CD8-positive, alpha-beta T cell (primary cell): ENCODE measurements at regions of chr17 and their contacts with region 1.

Region 1: GRCh38 chr17:81860756-81861518 is 602 bp upstream of the P4HB start:
- DNase-seq: peak; percentile 98 to 100 (median 99)
- ATAC-seq: peak; percentile 87
- H3K4me3 ChIP-seq: peak overlapping the region; percentile 54 to 72
- H3K4me3 Mint-ChIP-seq: peak overlapping the region; percentile 90
- H3K27ac ChIP-seq: peak overlapping the region; percentile 88 to 98
- H3K27ac Mint-ChIP-seq: peak overlapping the region; percentile 98
- H3K4me1 ChIP-seq: peaks cover 33% of the 10 kb centered on the region
- H3K4me1 Mint-ChIP-seq: peaks cover 44% of the 10 kb centered on the region
- H3K27me3 ChIP-seq: no peaks in the 10 kb centered on the region
- H3K27me3 Mint-ChIP-seq: no peaks in the 10 kb centered on the region
- CTCF ChIP-seq: no peak

Region 2: DNA sequence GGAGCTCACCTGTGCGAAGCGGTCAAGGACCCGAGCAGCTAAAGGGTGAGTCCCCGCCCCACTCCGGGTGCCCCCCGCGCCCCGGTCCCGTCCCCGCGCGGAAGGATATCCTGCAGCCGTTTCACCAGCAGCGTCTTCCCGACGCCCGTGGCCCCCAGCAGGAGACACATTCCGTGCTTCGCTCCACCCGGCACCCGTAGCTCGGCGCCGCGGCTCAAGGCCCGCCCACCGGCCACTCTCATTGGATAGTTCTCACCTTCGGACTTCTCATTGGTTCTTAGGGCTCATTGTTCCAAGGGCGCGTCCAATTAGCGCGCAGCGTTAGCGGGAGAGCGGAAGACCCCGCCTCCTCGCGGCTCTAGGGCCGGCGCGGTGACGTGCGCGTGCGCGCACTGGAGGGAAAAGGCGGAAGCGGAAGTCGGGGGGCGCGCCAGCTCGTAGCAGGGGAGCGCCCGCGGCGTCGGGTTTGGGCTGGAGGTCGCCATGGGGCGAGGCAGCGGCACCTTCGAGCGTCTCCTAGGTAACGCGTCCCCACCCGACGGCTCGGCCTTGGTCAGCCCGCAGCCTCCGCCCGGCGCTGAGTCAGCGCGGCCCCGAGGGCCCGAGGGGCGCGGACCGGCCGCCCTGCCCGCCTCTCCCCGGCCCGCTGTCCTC is 177.2 kb before region 1 on chr17 and contains the starts of genes ARL16 and HGS:
- CTCF ChIA-PET with region 1: no interaction called
- POLR2A ChIA-PET with region 1: interaction called, 3 read pairs
- intact Hi-C with region 1: loop called (anchors 1 kb)
- DNase-seq: peak; percentile 95 to 99 (median 97)
- ATAC-seq: peak; percentile 98
- H3K4me3 ChIP-seq: peak within 1 kb of the TSS; percentile 89 to 98
- H3K4me3 Mint-ChIP-seq: peak within 1 kb of the TSS; percentile 89
- H3K27ac ChIP-seq: peak within 1 kb of the TSS; percentile 57 to 77
- H3K27ac Mint-ChIP-seq: peak within 1 kb of the TSS; percentile 88
- H3K4me1 ChIP-seq: peaks cover 27% of the 10 kb centered on the region
- H3K4me1 Mint-ChIP-seq: peaks cover 32% of the 10 kb centered on the region
- H3K27me3 ChIP-seq: no peaks in the 10 kb centered on the region
- H3K27me3 Mint-ChIP-seq: no peaks in the 10 kb centered on the region
- CTCF ChIP-seq: no peak
- total RNA-seq, gene ARL16: 14.3 to 16.4 TPM
- total RNA-seq, gene HGS: 121 to 126 TPM

Region 3: DNA sequence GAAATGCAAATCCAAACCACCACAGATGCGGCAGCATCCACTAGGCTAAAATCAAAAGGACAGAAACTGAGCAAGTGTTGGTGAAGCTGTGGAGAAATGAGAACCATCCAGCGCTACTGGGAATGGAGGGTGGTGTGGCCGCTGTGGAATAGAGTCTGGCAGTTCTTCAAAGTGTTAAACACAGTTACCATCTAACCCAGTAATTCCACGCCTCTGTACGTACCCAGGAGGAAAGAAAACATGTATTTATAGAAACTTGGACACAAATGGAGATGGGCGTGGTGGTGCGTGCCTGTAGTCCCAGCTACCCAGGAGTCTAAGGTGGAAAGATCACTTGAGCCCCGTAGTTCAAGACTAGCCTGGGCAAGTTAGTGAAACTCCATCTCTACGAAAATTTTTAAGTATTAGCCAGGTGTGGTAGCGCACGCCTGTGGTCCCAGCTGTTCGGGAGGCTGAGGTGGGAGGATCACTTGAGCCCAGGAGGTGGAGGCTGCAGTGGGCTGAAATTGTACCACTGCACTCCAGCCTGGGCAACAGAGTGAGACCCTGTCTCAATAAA is 137.2 kb before region 1 on chr17:
- CTCF ChIA-PET with region 1: no interaction called
- POLR2A ChIA-PET with region 1: no interaction called
- intact Hi-C with region 1: no loop called
- DNase-seq: no peak
- ATAC-seq: no peak
- H3K4me3 ChIP-seq: no peak overlapping the region
- H3K4me3 Mint-ChIP-seq: no peak overlapping the region
- H3K27ac ChIP-seq: no peak overlapping the region
- H3K27ac Mint-ChIP-seq: no peak overlapping the region
- H3K4me1 ChIP-seq: no peaks in the 10 kb centered on the region
- H3K4me1 Mint-ChIP-seq: no peaks in the 10 kb centered on the region
- H3K27me3 ChIP-seq: no peaks in the 10 kb centered on the region
- H3K27me3 Mint-ChIP-seq: peaks cover 11% of the 10 kb centered on the region
- CTCF ChIP-seq: no peak

Region 4: GRCh38 chr17:81733507-81734404 is 127.2 kb before region 1 on chr17:
- CTCF ChIA-PET with region 1: no interaction called
- POLR2A ChIA-PET with region 1: no interaction called
- intact Hi-C with region 1: no loop called
- DNase-seq: peak in 6 of 9 experiments; percentile 34 to 72 (median 64)
- ATAC-seq: peak; percentile 90
- H3K4me3 ChIP-seq: no peak overlapping the region
- H3K4me3 Mint-ChIP-seq: no peak overlapping the region
- H3K27ac ChIP-seq: no peak overlapping the region
- H3K27ac Mint-ChIP-seq: no peak overlapping the region
- H3K4me1 ChIP-seq: no peaks in the 10 kb centered on the region
- H3K4me1 Mint-ChIP-seq: peaks cover 8% of the 10 kb centered on the region
- H3K27me3 ChIP-seq: peaks cover 0 to 19% of the 10 kb centered on the region in 2 experiments
- H3K27me3 Mint-ChIP-seq: peaks cover 28% of the 10 kb centered on the region
- CTCF ChIP-seq: peak; percentile 70

Region 5: GRCh38 chr17:81833160-81833920 is 27.6 kb before region 1 on chr17 and contains the start of gene MCRIP1:
- CTCF ChIA-PET with region 1: no interaction called
- POLR2A ChIA-PET with region 1: interaction called, 4 read pairs
- intact Hi-C with region 1: loop called (anchors 1 kb)
- DNase-seq: peak; percentile 80 to 97 (median 94)
- ATAC-seq: peak; percentile 74
- H3K4me3 ChIP-seq: peak within 1 kb of the TSS; percentile 71 to 80
- H3K4me3 Mint-ChIP-seq: peak within 1 kb of the TSS; percentile 94
- H3K27ac ChIP-seq: peak within 1 kb of the TSS; percentile 90 to 93
- H3K27ac Mint-ChIP-seq: peak within 1 kb of the TSS; percentile 96
- H3K4me1 ChIP-seq: peaks cover 17% of the 10 kb centered on the region
- H3K4me1 Mint-ChIP-seq: peaks cover 23% of the 10 kb centered on the region
- H3K27me3 ChIP-seq: no peaks in the 10 kb centered on the region
- H3K27me3 Mint-ChIP-seq: no peaks in the 10 kb centered on the region
- CTCF ChIP-seq: no peak
- total RNA-seq, gene MCRIP1: 32.2 to 34.0 TPM

Region 6: DNA sequence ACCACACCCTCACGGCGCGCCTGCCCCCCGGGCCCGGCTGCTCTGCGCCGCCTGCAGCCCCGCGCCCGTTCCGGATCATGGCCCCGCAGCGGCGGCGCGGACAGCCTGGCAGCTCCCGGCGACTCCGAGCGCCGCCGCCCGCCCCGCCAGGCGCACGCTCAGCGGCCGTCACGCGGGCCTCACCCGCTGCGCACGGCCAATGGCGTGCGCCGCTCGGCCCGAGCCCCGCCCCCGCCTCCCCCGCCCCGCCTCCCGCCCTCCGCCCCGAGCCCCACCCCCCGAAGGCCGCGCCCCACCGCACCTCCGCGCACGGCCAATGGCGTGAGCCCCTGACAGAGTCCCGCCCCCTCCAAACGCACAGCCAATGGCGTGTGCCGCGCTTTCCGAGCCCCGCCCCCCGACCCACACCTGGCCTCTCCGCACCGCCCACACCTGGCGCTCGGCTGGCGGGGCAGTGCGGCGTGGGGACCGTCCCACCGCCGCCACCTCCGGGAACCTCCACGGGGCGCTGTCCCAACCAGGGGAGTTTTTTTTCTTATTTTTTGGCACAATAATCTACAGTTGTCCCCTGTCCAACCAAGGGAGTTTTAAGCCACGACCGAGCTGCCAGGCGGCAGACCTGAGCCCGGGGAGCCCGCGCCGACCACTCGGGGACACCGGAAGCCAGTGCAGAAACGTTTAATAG is 50.5 kb after region 1 on chr17 and contains the start of gene PCYT2:
- CTCF ChIA-PET with region 1: no interaction called
- POLR2A ChIA-PET with region 1: no interaction called
- intact Hi-C with region 1: loop called (anchors 1 kb)
- DNase-seq: peak; percentile 85 to 97 (median 94)
- ATAC-seq: peak; percentile 94
- H3K4me3 ChIP-seq: peak within 1 kb of the TSS; percentile 68 to 73
- H3K4me3 Mint-ChIP-seq: peak within 1 kb of the TSS; percentile 85
- H3K27ac ChIP-seq: peak within 1 kb of the TSS; percentile 31 to 37
- H3K27ac Mint-ChIP-seq: peak within 1 kb of the TSS; percentile 55
- H3K4me1 ChIP-seq: peaks cover 18% of the 10 kb centered on the region
- H3K4me1 Mint-ChIP-seq: peaks cover 20% of the 10 kb centered on the region
- H3K27me3 ChIP-seq: no peaks in the 10 kb centered on the region
- H3K27me3 Mint-ChIP-seq: no peaks in the 10 kb centered on the region
- CTCF ChIP-seq: no peak
- total RNA-seq, gene PCYT2: 18.0 to 18.1 TPM

Region 7: GRCh38 chr17:81934850-81935708 is 74.1 kb after region 1 on chr17:
- CTCF ChIA-PET with region 1: no interaction called
- POLR2A ChIA-PET with region 1: no interaction called
- intact Hi-C with region 1: no loop called
- DNase-seq: no peak
- ATAC-seq: no peak
- H3K4me3 ChIP-seq: no peak overlapping the region
- H3K4me3 Mint-ChIP-seq: no peak overlapping the region
- H3K27ac ChIP-seq: no peak overlapping the region
- H3K27ac Mint-ChIP-seq: no peak overlapping the region
- H3K4me1 ChIP-seq: peaks cover 9% of the 10 kb centered on the region
- H3K4me1 Mint-ChIP-seq: peaks cover 2% of the 10 kb centered on the region
- H3K27me3 ChIP-seq: no peaks in the 10 kb centered on the region
- H3K27me3 Mint-ChIP-seq: peaks cover 2% of the 10 kb centered on the region
- CTCF ChIP-seq: no peak

Region 8: GRCh38 chr17:82098072-82098821 is 237.3 kb after region 1 on chr17 and contains the start of gene FASN:
- CTCF ChIA-PET with region 1: no interaction called
- POLR2A ChIA-PET with region 1: no interaction called
- intact Hi-C with region 1: loop called (anchors 1 to 2 kb)
- DNase-seq: peak; percentile 81 to 96 (median 92)
- ATAC-seq: peak; percentile 61
- H3K4me3 ChIP-seq: peak within 1 kb of the TSS; percentile 48 to 74
- H3K4me3 Mint-ChIP-seq: peak within 1 kb of the TSS; percentile 74
- H3K27ac ChIP-seq: peak within 1 kb of the TSS; percentile 81 to 87
- H3K27ac Mint-ChIP-seq: peak within 1 kb of the TSS; percentile 41
- H3K4me1 ChIP-seq: peaks cover 20% of the 10 kb centered on the region
- H3K4me1 Mint-ChIP-seq: peaks cover 5% of the 10 kb centered on the region
- H3K27me3 ChIP-seq: no peaks in the 10 kb centered on the region
- H3K27me3 Mint-ChIP-seq: no peaks in the 10 kb centered on the region
- CTCF ChIP-seq: peak; percentile 13
- total RNA-seq, gene FASN: 245 to 263 TPM